ENCODE measurements at regions of chr10 and their contacts with region 1.

Region 1: GRCh38 chr10:97914837-97915211 is 65.2 kb downstream of the GOLGA7B start:
- DNase-seq: peak; percentile 83

Region 2: DNA sequence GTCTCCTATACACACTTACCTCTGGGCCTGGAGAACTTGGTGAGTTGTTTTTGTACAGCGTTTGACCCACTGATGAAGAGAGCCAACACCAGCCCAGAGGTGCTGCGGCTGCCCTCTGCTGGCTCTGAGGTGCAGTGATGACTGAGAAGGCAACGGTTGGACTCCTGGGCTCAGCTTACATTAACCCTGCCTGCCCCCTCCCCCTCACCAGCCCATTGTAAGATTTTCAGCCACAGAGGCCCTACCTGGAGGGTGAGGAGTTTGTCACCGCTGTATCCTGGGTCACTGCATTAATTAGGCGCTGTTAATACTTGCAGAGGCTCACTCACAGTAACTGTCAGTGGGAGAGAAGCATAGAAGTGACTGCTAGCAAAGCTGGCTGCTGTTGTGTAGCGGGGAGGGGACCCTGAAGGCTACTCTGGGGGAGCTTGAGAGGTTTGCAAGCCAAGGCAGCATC is 361.2 kb before region 1 on chr10:
- intact Hi-C with region 1: no loop called
- DNase-seq: peak; percentile 86

Region 3: DNA sequence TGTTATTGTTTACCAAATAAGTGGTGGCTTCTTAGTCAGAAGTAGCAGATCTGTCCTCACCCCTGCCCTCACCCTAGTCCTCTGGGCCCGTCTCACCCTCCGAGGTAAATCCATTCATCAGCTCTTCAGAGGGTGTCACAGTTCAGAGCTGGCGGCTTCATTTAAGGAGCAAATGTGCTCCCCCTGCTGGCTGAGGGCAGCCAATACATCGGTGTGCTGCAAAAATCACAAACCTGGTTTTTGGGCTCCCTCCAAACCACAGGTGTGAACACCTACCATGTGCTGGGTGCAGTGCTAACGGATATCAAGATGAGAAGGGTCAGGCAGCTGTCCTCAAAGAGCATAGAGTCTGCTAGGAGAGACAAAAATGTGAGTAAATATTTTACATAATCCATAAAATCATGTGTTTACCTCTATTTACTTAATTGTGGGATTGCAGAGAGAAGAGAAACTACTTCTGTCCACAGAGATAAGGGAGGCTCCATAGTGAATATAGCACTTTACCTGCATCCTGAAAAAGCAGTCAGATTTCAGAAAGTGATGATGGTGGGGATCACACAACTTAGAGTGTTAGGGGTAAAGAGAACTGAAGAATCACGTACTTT is 131.1 kb after region 1 on chr10:
- intact Hi-C with region 1: loop called (anchors 1 kb)
- DNase-seq: no peak

Region 4: GRCh38 chr10:98309366-98310355 is 394.8 kb after region 1 on chr10:
- intact Hi-C with region 1: loop called (anchors 10 kb)
- DNase-seq: peak; percentile 81

Measured in cardiac septum (tissue), 1 donor.